ENCODE measurements at regions of chr11 and their contacts with region 1.

Region 1: GRCh38 chr11:31810779-31811647 is at the start of gene PAX6:
- DNase-seq: peak; percentile 74
- ATAC-seq: peak; percentile 40
- H3K4me3 Mint-ChIP-seq: peak within 1 kb of the TSS; percentile 60
- H3K27ac Mint-ChIP-seq: no peak within 1 kb of the TSS
- H3K4me1 Mint-ChIP-seq: peaks cover 41% of the 10 kb centered on the region
- H3K27me3 Mint-ChIP-seq: peaks cover 70% of the 10 kb centered on the region
- total RNA-seq, gene PAX6: 0.07 TPM in 1 of 2 experiments, not detected in the other

Region 2: GRCh38 chr11:30322826-30323710 is 1487.9 kb before region 1 on chr11 and contains the start of gene ARL14EP:
- CTCF ChIA-PET with region 1: no interaction called
- POLR2A ChIA-PET with region 1: no interaction called
- intact Hi-C with region 1: loop called in 1 of 2 experiments (anchors 10 kb)
- DNase-seq: peak; percentile 94
- ATAC-seq: peak; percentile 92
- H3K4me3 Mint-ChIP-seq: peak within 1 kb of the TSS; percentile 94
- H3K27ac Mint-ChIP-seq: peak within 1 kb of the TSS; percentile 100
- H3K4me1 Mint-ChIP-seq: peaks cover 38% of the 10 kb centered on the region
- H3K27me3 Mint-ChIP-seq: peaks cover 6% of the 10 kb centered on the region
- total RNA-seq, gene ARL14EP: 34.8 to 51.8 TPM

Region 3: DNA sequence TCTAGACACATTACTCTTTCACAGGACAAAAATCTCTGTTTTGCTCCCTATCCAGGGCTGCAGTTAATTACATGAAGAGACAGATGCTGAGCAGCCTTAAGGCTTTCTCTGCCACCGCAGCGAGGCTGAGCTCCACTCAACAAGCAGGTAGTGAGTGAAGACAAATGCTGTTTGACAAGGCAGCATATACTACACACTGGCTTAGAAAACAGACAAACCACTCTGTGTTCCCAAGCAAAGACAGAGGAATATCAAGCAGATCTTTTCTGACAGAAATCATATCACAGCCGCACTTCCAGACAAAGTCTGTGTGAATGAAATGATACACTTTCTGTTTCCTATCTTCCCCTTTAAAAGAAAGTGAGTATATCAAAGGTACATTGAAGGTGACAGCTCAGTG is 809.6 kb before region 1 on chr11:
- CTCF ChIA-PET with region 1: no interaction called
- POLR2A ChIA-PET with region 1: no interaction called
- intact Hi-C with region 1: no loop called
- DNase-seq: no peak
- ATAC-seq: no peak
- H3K4me3 Mint-ChIP-seq: no peak overlapping the region
- H3K27ac Mint-ChIP-seq: no peak overlapping the region
- H3K4me1 Mint-ChIP-seq: no peaks in the 10 kb centered on the region
- H3K27me3 Mint-ChIP-seq: no peaks in the 10 kb centered on the region

Region 4: GRCh38 chr11:31397239-31397834 is 413.7 kb before region 1 on chr11:
- CTCF ChIA-PET with region 1: no interaction called
- POLR2A ChIA-PET with region 1: no interaction called
- intact Hi-C with region 1: loop called in 1 of 2 experiments (anchors 10 kb)
- DNase-seq: no peak
- ATAC-seq: no peak
- H3K4me3 Mint-ChIP-seq: no peak overlapping the region
- H3K27ac Mint-ChIP-seq: no peak overlapping the region
- H3K4me1 Mint-ChIP-seq: no peaks in the 10 kb centered on the region
- H3K27me3 Mint-ChIP-seq: no peaks in the 10 kb centered on the region

Region 5: DNA sequence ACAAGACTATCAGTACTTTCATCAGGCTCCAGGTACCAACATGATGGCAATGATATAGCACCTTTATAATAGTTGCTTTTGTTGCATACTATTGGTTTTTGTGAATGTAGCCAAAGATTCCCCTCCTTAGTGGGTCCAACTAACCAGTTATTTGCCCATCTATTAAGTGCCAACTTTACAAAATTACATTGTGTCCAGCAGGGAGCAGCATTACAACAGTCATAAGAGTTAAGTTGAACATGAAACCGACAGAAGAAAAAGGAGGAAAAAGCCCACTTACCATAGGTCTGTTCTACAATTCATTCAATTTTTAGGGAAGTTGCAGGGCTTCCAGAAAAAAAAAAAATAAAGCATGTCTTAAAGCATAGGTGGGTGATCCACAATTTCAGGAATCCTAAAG is 323.2 kb before region 1 on chr11:
- CTCF ChIA-PET with region 1: no interaction called
- POLR2A ChIA-PET with region 1: no interaction called
- intact Hi-C with region 1: loop called in 1 of 2 experiments (anchors 10 kb)
- DNase-seq: no peak
- ATAC-seq: no peak
- H3K4me3 Mint-ChIP-seq: no peak overlapping the region
- H3K27ac Mint-ChIP-seq: no peak overlapping the region
- H3K4me1 Mint-ChIP-seq: peaks cover 18% of the 10 kb centered on the region
- H3K27me3 Mint-ChIP-seq: no peaks in the 10 kb centered on the region

Region 6: DNA sequence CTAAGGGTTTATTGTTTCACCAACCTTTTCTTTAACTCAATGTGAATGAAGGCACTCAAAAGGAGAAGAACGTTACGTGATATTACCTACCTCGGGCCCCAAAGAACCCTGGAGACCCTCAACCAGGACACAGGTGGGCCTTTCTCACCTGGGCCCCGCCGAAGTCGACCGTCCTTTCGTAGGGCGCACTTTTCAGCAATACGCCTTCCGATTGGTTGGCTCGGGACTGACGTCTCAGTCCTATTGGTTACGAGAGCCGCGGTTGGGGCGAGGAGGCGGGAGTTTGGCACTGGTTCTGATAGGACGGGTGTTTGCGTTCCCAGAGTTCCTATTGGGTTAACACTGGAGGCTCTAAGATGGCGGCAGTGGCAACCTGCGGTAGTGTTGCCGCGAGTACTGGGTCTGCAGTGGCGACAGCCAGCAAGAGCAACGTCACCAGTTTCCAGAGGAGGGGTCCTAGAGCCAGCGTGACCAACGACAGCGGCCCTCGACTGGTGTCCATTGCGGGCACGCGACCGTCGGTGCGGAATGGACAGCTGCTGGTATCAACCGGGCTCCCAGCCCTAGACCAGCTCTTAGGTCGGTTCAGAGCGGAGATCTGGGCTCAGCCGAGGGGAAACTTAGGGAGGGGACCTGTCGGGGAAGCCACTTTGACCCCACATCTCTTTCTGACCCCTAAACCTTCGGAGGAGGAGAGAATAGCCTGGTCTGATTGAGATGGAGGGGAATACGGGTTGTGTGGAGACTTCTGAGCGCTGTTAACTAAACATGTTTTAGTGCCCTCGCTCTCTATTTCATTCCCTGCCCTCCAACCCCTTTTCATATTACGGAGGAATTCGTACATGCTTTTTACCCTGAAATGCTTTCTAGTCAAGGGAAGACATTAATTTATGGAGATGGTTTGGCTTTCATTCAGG is 301.3 kb before region 1 on chr11 and contains the starts of genes ELP4 and IMMP1L:
- CTCF ChIA-PET with region 1: no interaction called
- POLR2A ChIA-PET with region 1: no interaction called
- intact Hi-C with region 1: loop called in 1 of 2 experiments (anchors 5 kb)
- DNase-seq: peak; percentile 97
- ATAC-seq: peak; percentile 100
- H3K4me3 Mint-ChIP-seq: peak within 1 kb of the TSS; percentile 98
- H3K27ac Mint-ChIP-seq: peak within 1 kb of the TSS; percentile 88
- H3K4me1 Mint-ChIP-seq: peaks cover 36% of the 10 kb centered on the region
- H3K27me3 Mint-ChIP-seq: no peaks in the 10 kb centered on the region
- total RNA-seq, gene ELP4: 21.9 to 30.9 TPM
- total RNA-seq, gene IMMP1L: 18.8 to 21.0 TPM

Region 7: DNA sequence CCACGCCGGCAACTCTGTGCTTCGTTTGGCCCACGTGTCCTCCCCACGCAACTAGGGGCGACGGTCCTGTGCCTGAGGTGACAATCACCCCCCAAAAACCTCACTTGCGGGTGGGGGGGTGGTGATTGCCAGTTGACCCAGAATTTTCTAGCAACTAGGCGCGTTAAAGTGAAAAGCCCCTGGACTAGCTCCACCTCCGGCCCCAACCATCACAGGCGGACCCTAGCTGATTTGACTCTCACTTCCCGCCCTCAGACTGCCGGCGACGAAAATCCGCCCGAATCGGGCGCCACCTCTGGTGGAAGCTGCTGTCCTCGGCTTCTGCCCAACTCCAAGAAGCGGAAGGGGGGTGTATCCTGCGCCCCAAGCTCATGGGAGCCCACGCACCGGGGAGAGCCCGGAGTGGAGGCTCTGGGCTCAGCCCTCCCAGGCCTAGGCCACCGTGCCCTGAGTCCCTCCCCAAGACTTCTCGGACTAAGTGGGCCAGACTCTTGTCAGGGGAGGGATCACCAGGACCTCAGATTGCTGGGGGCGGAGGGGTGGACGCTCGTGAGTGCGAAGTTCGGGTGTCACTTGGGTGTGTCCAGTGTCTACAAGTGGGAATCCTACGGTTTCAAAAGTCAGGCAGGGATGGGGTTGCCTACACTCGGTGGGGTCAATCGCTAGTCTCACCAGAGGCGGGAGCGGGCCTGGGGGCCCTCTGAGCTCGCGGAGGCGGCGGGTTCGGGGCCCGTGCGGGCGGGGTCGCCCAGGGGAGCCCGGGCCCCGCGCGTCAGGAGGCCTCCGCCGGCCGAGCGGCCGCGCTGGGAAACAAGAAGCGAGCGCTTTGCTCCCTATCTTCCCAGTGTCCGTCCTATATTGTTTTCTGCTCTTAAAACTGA is 12.2 kb before region 1 on chr11:
- CTCF ChIA-PET with region 1: interaction called, 3 read pairs
- POLR2A ChIA-PET with region 1: interaction called, 4 read pairs
- intact Hi-C with region 1: loop called in 1 of 2 experiments (anchors 1 kb)
- DNase-seq: peak; percentile 57
- ATAC-seq: peak; percentile 47
- H3K4me3 Mint-ChIP-seq: no peak overlapping the region
- H3K27ac Mint-ChIP-seq: no peak overlapping the region
- H3K4me1 Mint-ChIP-seq: peaks cover 36% of the 10 kb centered on the region
- H3K27me3 Mint-ChIP-seq: peaks cover 74% of the 10 kb centered on the region

Region 8: DNA sequence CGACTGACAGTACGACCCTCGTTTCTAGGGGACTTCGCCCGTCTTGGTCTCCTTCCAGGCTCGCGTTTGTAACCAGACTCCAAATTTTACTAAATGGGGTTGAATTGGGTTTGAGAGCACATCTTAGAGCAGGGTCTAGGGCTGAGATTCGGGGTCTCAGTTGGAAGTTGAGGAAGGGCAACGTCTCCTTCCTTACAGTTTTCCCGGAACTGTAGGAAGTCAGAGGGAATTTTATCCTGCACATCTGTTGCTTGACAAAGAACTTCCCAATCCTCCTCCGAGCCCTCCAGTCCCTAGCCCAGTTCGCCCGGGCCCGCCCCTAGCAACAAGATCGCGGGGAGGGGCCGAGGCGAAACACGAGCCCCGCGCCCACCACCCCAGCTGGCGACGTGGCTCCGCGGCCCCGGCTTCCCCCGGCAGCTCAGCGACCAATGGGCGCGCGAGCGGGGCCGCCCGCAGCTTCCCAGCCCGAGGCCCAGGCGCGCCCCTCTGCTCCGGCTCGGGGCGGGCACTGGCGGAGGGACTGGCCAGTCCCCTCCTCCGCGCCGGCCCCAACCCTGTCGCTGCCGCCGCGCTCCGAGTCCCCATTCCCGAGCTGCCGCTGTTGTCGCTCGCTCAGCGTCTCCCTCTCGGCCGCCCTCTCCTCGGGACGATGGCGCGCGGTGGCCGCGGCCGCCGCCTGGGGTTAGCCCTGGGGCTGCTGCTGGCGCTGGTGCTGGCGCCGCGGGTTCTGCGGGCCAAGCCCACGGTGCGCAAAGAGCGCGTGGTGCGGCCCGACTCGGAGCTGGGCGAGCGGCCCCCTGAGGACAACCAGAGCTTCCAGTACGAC is 279.7 kb after region 1 on chr11 and contains the start of gene RCN1:
- CTCF ChIA-PET with region 1: no interaction called
- POLR2A ChIA-PET with region 1: no interaction called
- intact Hi-C with region 1: loop called in 1 of 2 experiments (anchors 5 kb)
- DNase-seq: peak; percentile 62
- ATAC-seq: peak; percentile 59
- H3K4me3 Mint-ChIP-seq: peak within 1 kb of the TSS; percentile 79
- H3K27ac Mint-ChIP-seq: peak within 1 kb of the TSS; percentile 85
- H3K4me1 Mint-ChIP-seq: peaks cover 43% of the 10 kb centered on the region
- H3K27me3 Mint-ChIP-seq: peaks cover 10% of the 10 kb centered on the region
- total RNA-seq, gene RCN1: 19.1 to 24.1 TPM